Activated CD4-positive, alpha-beta T cell treated with anti-CD3 and anti-CD28 coated beads, Interleukin-2, amount 10 ng/mL, durations not matched to agents 24 days and 14 days (primary cell): ENCODE measurements at regions of chr12 and their contacts with region 1.

Region 1: GRCh38 chr12:56104109-56104814 is at the start of gene PA2G4:
- DNase-seq: peak; percentile 100
- H3K4me3 Mint-ChIP-seq: peak within 1 kb of the TSS; percentile 98
- H3K27ac Mint-ChIP-seq: peak within 1 kb of the TSS; percentile 98
- H3K4me1 Mint-ChIP-seq: peaks cover 38% of the 10 kb centered on the region
- H3K27me3 Mint-ChIP-seq: no peaks in the 10 kb centered on the region
- total RNA-seq, gene PA2G4: 453 and 472 TPM in 2 replicates

Region 2: DNA sequence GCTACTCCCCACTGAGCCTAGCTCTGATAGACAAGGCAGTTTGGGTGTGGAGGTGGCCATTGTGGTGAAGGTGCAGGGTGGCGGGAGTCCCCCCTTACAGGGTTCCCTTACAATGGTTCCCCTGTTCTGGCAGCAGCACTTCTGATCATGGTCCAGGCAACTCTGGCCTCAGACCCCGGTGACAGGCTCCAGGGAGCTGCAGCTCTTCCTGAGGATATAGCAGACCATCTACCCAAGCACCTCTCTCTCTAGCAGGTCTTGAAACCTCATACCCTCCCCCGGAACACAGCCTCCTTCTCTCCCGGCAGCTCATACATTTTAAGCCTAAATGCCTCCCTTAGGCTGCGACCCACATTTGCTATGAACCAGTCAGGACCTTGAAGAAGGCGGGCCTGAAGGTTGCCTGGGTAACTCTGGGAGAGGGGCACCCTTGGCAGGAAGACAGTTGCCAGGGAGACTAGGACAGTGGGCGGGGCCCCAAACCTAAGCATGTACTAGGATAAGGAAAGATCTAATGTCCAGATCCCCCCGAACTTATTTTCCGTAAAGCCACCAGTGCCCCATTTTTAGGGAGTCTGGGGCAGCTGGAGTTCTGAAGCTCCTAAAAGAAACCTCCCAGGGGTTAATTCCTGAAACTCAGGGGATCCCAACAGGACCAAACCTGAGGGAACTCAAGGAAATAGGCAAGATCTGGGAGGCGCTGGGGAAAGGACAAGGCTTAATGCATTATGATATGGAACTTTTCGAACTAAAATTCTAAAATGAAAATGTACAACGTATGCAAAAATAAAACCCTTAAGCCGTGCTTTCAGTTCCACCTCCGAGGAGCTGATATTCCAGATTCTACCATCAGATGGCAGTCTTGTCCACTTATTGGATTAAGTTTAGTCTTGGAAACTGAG is 365.9 kb before region 1 on chr12:
- intact Hi-C with region 1: loop called (anchors 5 kb)
- DNase-seq: peak; percentile 96
- H3K4me3 Mint-ChIP-seq: peak overlapping the region; percentile 88
- H3K27ac Mint-ChIP-seq: peak overlapping the region; percentile 85
- H3K4me1 Mint-ChIP-seq: peaks cover 31% of the 10 kb centered on the region
- H3K27me3 Mint-ChIP-seq: peaks cover 4% of the 10 kb centered on the region

Region 3: GRCh38 chr12:55757701-55758100 is 346.6 kb before region 1 on chr12:
- intact Hi-C with region 1: no loop called
- DNase-seq: no peak
- H3K4me3 Mint-ChIP-seq: no peak overlapping the region
- H3K27ac Mint-ChIP-seq: peak overlapping the region; percentile 2
- H3K4me1 Mint-ChIP-seq: peaks cover 10% of the 10 kb centered on the region
- H3K27me3 Mint-ChIP-seq: no peaks in the 10 kb centered on the region

Region 4: DNA sequence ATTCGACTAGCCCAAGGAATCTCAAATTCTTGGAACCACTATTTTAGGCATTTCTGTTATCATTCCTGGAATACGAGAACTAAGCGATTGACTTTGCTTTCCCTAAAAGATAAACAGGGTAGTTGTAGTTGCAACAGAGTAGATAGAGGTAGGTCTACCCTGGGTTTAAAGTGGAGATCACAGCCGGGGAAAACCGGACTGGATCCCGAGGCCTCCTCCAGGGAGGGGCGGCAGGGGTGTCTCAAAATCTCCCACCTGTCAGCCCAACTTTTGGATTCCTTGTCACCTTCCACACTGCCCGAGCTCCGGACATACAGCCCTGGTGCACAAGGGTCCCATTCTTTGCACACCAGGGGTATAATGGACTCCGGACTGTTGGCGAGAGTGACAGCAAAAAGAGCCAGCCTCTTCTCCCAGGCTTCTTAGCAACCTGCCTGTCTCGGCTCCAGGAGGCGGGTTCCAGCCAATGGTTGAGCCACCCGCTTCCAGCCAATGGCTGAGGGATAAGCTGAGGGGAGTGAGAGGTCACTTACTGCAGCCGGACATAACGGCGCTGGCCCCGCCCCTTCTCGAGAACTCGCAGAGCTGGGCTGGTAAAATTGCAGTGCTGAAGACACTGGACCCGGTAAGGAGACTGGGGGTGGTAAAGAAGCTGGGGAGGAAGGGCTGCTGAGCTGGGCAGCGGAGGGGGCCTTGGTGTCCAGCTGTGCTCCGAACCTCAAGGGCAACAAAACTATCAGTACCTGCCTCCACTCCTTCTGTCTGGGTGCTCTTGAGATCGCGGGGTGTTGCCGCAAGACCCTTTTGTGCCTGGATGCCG is 107.3 kb before region 1 on chr12 and contains the start of gene SUOX:
- intact Hi-C with region 1: loop called (anchors 1 kb)
- DNase-seq: peak; percentile 86
- H3K4me3 Mint-ChIP-seq: peak within 1 kb of the TSS; percentile 87
- H3K27ac Mint-ChIP-seq: peak within 1 kb of the TSS; percentile 53
- H3K4me1 Mint-ChIP-seq: peaks cover 28% of the 10 kb centered on the region
- H3K27me3 Mint-ChIP-seq: no peaks in the 10 kb centered on the region
- total RNA-seq, gene SUOX: 9.3 and 10.2 TPM in 2 replicates

Region 5: GRCh38 chr12:56078990-56079664 is 25.1 kb before region 1 on chr12:
- intact Hi-C with region 1: loop called (anchors 1 kb)
- DNase-seq: peak; percentile 85
- H3K4me3 Mint-ChIP-seq: peak overlapping the region; percentile 88
- H3K27ac Mint-ChIP-seq: no peak overlapping the region
- H3K4me1 Mint-ChIP-seq: peaks cover 2% of the 10 kb centered on the region
- H3K27me3 Mint-ChIP-seq: peaks cover 25% of the 10 kb centered on the region

Region 6: GRCh38 chr12:56448860-56449621 is 344.8 kb after region 1 on chr12 and contains the start of gene TIMELESS:
- intact Hi-C with region 1: loop called (anchors 5 kb)
- DNase-seq: peak; percentile 97
- H3K4me3 Mint-ChIP-seq: peak within 1 kb of the TSS; percentile 95
- H3K27ac Mint-ChIP-seq: peak within 1 kb of the TSS; percentile 90
- H3K4me1 Mint-ChIP-seq: peaks cover 29% of the 10 kb centered on the region
- H3K27me3 Mint-ChIP-seq: no peaks in the 10 kb centered on the region
- total RNA-seq, gene TIMELESS: 46.5 and 48.8 TPM in 2 replicates